ENCODE measurements at regions of chr4 and their contacts with region 1.

Region 1: GRCh38 chr4:140359562-140360427 is 13.7 kb upstream of the SCOC start:
- DNase-seq: peak in 4 of 5 donors; percentile 63 to 75 (median 70)
- ATAC-seq: peak in 3 of 4 donors; percentile 76 to 90 (median 79)
- H3K4me3 ChIP-seq: no peak overlapping the region
- H3K27ac ChIP-seq: no peak overlapping the region
- H3K4me1 ChIP-seq: no peaks in the 10 kb centered on the region
- H3K27me3 ChIP-seq: peaks cover 0 to 4% (median 0%) of the 10 kb centered on the region in 9 donors
- CTCF ChIP-seq: peak; percentile 67 to 84 (median 78)
- POLR2A ChIP-seq: no peak

Region 2: DNA sequence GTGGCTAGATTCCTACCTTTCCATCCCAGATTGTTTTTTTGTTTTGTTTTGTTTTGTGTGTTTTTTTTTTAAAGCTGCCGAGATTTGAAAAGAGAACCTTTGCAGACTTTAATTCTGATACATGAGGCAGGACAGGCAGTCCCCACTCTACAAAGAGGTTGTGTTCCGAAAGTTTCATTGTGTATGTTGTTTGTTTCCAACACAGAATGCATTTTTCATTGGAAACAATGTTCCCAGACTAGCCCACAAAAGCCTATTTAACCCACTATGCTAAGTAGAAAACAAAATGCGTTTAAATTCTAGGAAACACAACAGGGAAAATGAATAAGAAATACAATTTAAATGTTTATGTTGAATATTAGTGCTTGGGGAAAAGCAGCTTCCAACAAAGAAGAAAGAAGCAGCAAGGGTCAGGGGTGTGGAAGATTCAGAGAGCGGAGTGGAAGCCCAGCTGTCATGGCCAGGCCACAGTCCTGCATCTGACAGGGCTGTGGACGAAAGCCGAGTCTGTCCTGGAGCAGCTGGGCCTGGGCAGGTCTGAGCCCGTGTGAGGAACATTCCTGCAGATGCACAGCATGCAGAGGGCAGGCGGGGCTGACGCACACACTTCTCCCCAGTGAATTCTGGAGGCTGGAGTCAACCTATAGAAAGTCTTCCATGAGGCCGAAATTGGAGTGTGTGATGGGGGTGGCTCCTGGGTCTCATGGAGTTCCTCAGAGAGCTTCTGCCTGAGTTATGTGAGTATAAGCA is 791.4 kb before region 1 on chr4:
- intact Hi-C with region 1: no loop called
- DNase-seq: no peak
- ATAC-seq: no peak
- H3K4me3 ChIP-seq: no peak overlapping the region
- H3K27ac ChIP-seq: no peak overlapping the region
- H3K4me1 ChIP-seq: no peaks in the 10 kb centered on the region
- H3K27me3 ChIP-seq: no peaks in the 10 kb centered on the region
- CTCF ChIP-seq: no peak
- POLR2A ChIP-seq: no peak

Region 3: DNA sequence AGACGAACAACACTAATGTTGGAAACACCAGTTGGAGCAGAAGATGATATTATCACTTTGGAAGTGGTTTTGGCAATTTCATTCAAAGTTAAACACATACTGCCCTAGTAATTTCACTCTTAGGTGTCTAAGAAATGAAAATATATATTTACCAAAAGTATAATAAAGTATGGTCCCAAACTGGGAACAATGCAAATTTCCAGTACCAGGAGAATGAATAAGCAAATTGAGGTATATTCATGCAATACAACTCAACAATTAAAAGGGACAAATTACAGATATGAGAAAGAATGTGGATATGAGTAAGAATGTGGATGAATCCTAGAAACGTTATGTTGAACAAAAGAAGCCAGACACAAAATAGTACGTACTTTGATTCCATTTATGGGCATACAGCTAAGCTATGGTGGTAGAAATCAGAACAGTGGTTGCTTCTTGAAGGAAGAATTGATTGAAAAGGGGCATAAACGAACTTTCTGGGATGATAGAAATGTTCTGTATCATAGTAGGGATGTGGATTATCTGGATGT is 174.2 kb after region 1 on chr4:
- intact Hi-C with region 1: loop called in 2 of 10 experiments (anchors 10 kb)
- DNase-seq: no peak
- ATAC-seq: no peak
- H3K4me3 ChIP-seq: no peak overlapping the region
- H3K27ac ChIP-seq: no peak overlapping the region
- H3K4me1 ChIP-seq: peaks cover 0 to 9% (median 0%) of the 10 kb centered on the region in 12 donors
- H3K27me3 ChIP-seq: no peaks in the 10 kb centered on the region
- CTCF ChIP-seq: no peak
- POLR2A ChIP-seq: no peak

Region 4: DNA sequence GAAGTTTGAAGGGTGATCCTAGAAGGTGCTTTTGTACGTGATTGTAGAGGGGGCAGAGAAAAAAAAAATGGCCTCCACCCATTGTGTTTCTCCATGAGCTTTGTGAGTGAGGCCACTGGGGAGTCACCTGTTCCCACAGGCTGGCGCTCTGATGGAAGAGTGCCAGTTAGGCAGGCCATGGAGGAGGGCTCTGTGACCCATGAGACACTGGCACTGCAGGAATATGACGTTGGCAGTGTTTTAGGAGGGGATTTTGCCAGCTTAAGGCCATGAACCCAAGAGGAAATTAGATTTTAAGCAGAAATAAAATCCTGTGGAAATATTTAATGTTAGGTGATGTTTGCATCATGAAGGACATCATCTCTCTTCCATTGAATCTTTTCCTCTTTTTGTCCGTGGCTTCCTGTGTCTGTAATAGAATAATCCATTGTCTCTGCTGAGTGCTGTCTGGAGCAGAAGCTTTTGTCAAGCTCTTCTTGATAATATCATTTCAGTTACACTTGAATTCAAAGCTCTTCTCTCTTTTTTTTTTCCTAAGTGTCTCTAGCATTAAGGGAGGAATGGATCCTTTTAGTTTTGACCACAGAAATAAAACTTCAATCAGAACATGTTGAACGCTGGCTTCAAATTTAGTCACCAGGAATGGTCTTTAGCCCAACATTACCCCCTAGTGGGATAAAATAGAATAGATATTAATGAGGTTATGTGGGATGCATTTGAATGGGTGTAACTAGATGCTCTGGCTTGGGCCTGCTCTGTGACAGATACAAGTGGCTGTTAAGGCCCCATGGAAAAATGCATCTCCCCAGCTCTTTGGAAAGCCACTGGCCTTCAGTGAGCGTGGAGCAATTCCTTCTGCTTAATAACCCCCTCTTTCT is 250.0 kb after region 1 on chr4:
- intact Hi-C with region 1: loop called in 9 of 10 experiments (anchors 2 to 5 kb)
- DNase-seq: peak in 4 of 5 donors; percentile 28 to 57 (median 42)
- ATAC-seq: peak; percentile 40 to 88 (median 82)
- H3K4me3 ChIP-seq: no peak overlapping the region
- H3K27ac ChIP-seq: peak overlapping the region in 10 of 12 donors; percentile 7 to 50 (median 33)
- H3K4me1 ChIP-seq: peaks cover 0 to 15% (median 0%) of the 10 kb centered on the region in 12 donors
- H3K27me3 ChIP-seq: no peaks in the 10 kb centered on the region
- CTCF ChIP-seq: peak; percentile 34 to 74 (median 64)
- POLR2A ChIP-seq: no peak

Region 5: DNA sequence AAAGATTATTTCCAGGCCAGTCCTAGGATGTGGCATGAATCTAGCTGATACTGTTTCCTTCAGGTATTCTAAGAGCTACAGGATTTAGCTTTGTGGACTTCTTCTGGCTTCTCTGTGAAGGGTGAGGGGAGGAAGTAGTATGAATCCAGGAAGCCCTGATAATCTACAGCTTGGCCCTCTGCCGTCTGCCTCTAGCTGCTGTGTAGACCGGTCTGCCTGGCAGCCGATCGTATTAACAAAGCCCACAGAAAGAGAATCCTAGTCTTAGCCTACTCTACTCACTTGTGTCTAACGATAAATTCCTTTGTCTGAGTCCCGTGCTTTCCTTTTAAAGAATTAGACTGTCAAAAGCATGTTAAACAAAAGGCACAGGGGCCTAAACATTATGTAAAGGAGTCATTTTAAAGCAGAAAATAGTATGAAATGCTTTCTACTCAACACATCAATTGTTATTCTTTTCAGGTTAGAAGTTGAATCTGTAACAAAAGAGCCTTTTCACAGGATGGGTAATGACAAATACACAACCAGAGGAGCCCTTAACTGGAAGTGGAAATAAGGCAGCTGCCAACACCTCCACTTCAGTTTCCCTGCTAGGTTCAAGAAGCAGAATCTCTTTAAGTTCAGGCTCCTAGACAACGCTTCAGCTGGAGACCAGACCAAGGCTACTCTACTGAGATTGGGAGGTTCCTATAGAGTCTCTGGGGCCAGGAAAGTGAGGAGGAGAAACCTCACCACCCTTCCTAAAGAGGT is 257.9 kb after region 1 on chr4:
- intact Hi-C with region 1: loop called in 5 of 10 experiments (anchors 5 kb)
- DNase-seq: no peak
- ATAC-seq: no peak
- H3K4me3 ChIP-seq: no peak overlapping the region
- H3K27ac ChIP-seq: no peak overlapping the region
- H3K4me1 ChIP-seq: peaks cover 0 to 11% (median 0%) of the 10 kb centered on the region in 12 donors
- H3K27me3 ChIP-seq: no peaks in the 10 kb centered on the region
- CTCF ChIP-seq: no peak
- POLR2A ChIP-seq: no peak